Activated T-helper 2 cell treated with anti-CD3 and anti-CD28 coated beads, Interferon-gamma antibody, Interleukin-2, Interleukin-4, amounts not matched to agents 10 μg/mL and 5 μg/mL and 100 μg/mL, durations not matched to agents 14 hours and 24 hours and 36 hours (primary cell): ENCODE measurements at regions of chr6 and their contacts with region 1.

Region 1: DNA sequence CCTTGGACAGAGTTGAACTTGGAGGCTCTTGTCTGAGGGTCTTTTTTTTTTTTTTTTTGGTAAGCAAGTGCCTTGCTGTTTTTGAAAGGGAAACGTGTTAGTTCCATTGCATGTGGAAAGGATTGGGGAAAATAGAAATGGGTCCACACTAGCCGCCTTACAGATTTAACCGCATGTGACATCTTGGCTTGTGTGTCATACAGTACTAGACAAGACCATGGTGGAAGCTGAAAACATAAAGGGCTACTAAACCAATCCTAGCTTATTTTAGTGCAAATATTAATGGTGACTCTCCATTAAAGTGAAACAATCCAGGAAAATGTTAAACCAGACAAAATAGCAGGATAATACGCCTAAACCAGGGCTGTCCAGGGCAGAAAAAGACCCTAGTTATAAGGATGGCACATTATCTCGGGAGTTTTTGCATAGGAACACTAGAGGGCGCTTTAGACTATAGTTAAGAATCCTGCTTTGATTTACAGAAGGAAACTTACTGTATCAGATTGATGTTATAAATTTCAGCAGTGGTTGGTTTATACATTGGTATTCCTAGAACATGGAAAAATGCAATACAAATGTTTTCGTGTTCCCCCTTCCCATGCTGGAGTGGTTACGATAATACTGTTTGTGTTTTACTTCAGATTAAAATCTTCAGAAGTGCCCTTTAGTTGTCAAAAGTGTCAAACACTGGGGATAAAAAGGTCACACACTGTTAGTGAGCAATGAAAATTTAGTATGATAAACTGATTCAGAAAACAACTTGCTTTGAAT is 59.8 kb upstream of the DEK start:
- DNase-seq: no peak
- H3K4me3 Mint-ChIP-seq: no peak overlapping the region
- H3K27ac Mint-ChIP-seq: no peak overlapping the region
- H3K4me1 Mint-ChIP-seq: peaks cover 11% of the 10 kb centered on the region
- H3K27me3 Mint-ChIP-seq: peaks cover 6% of the 10 kb centered on the region

Region 2: GRCh38 chr6:18387061-18387721 is 63.1 kb after region 1 on chr6 and contains the start of gene RNF144B:
- intact Hi-C with region 1: loop called (anchors 2 kb)
- DNase-seq: peak; percentile 43
- H3K4me3 Mint-ChIP-seq: peak within 1 kb of the TSS; percentile 84
- H3K27ac Mint-ChIP-seq: peak within 1 kb of the TSS; percentile 1
- H3K4me1 Mint-ChIP-seq: peaks cover 27% of the 10 kb centered on the region
- H3K27me3 Mint-ChIP-seq: peaks cover 12% of the 10 kb centered on the region
- total RNA-seq, gene RNF144B: 4.0 and 5.7 TPM in 2 replicates